ENCODE measurements at regions of chrX and their contacts with region 1.

Region 1: GRCh38 chrX:115330498-115331168 is 41.1 kb downstream of the LUZP4 start:
- DNase-seq: peak in 6 of 14 experiments; percentile 3 to 37 (median 18)
- ATAC-seq: no peak
- H3K4me3 ChIP-seq: no peak overlapping the region
- H3K4me3 Mint-ChIP-seq: no peak overlapping the region
- H3K27ac ChIP-seq: no peak overlapping the region
- H3K27ac Mint-ChIP-seq: no peak overlapping the region
- H3K4me1 ChIP-seq: no peaks in the 10 kb centered on the region
- H3K4me1 Mint-ChIP-seq: no peaks in the 10 kb centered on the region
- H3K27me3 ChIP-seq: no peaks in the 10 kb centered on the region
- H3K27me3 Mint-ChIP-seq: no peaks in the 10 kb centered on the region
- CTCF ChIP-seq: peak; percentile 41

Region 2: GRCh38 chrX:115378471-115378870 is 47.8 kb after region 1 on chrX:
- CTCF ChIA-PET with region 1: no interaction called
- POLR2A ChIA-PET with region 1: no interaction called
- intact Hi-C with region 1: no loop called
- DNase-seq: no peak
- ATAC-seq: no peak
- H3K4me3 ChIP-seq: no peak overlapping the region
- H3K4me3 Mint-ChIP-seq: no peak overlapping the region
- H3K27ac ChIP-seq: no peak overlapping the region
- H3K27ac Mint-ChIP-seq: no peak overlapping the region
- H3K4me1 ChIP-seq: no peaks in the 10 kb centered on the region
- H3K4me1 Mint-ChIP-seq: no peaks in the 10 kb centered on the region
- H3K27me3 ChIP-seq: no peaks in the 10 kb centered on the region
- H3K27me3 Mint-ChIP-seq: no peaks in the 10 kb centered on the region
- CTCF ChIP-seq: no peak

Region 3: GRCh38 chrX:115642895-115643530 is 312.4 kb after region 1 on chrX:
- CTCF ChIA-PET with region 1: interaction called, 3 read pairs
- POLR2A ChIA-PET with region 1: no interaction called
- intact Hi-C with region 1: loop called in 1 of 2 experiments (anchors 5 kb)
- DNase-seq: peak in 6 of 14 experiments; percentile 3 to 53 (median 33)
- ATAC-seq: no peak
- H3K4me3 ChIP-seq: no peak overlapping the region
- H3K4me3 Mint-ChIP-seq: no peak overlapping the region
- H3K27ac ChIP-seq: no peak overlapping the region
- H3K27ac Mint-ChIP-seq: no peak overlapping the region
- H3K4me1 ChIP-seq: no peaks in the 10 kb centered on the region
- H3K4me1 Mint-ChIP-seq: no peaks in the 10 kb centered on the region
- H3K27me3 ChIP-seq: no peaks in the 10 kb centered on the region
- H3K27me3 Mint-ChIP-seq: no peaks in the 10 kb centered on the region
- CTCF ChIP-seq: peak; percentile 80

Measured in CD4-positive, alpha-beta T cell (primary cell).